ENCODE measurements at regions of chr13 and their contacts with region 1.

Region 1: DNA sequence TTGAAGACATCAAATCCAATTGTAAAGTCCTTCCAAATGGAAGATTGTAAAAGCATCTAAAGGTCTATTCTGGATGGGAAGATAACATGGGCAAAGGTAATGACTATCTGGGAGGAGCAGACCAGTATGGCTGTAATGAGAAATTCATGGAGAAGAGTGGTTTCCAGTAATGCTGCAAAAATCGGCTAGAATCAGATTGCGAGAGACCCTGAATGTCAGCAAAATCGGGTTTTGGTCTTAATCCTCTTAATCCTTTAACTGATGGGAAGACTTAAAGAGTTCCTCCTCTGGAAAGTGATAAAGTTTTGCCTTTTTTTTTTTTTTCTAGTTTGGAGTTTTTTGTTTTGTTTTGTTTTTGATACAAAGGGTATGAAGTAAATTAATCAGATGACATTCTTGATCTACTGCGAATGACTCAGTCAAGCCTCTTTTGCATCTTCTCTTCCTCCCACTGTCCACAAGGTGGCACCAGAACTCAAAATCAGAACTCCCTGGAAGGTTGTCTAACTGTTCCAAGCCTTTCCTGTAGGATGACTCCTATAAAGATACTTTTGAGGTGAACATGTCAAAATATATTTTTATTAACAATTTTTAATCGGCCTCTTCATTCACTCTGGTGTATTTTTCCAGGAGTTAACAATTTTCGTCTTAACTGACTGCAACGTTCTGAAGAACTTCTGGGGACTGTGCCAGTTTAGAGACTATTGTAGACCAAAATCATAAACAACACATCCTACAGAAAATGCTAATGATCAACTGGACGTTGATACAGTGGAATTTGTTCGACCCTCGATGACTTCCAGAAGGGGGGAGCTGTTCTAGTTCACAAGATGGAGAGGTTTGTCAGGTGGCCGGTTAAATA is 213.3 kb upstream of the MIR17HG start:
- DNase-seq: peak; percentile 45
- ATAC-seq: peak; percentile 82
- H3K4me3 ChIP-seq: no peak overlapping the region
- H3K27ac ChIP-seq: no peak overlapping the region
- H3K4me1 ChIP-seq: no peaks in the 10 kb centered on the region
- H3K27me3 ChIP-seq: no peaks in the 10 kb centered on the region
- CTCF ChIP-seq: peak; percentile 17 to 74 (median 67); a peak in 4 of 6 replicates
- POLR2A ChIP-seq: no peak
- RAD21 ChIP-seq: peak; percentile 49

Region 2: GRCh38 chr13:90839061-90839460 is 295.1 kb before region 1 on chr13:
- CTCF ChIA-PET with region 1: no interaction called
- POLR2A ChIA-PET with region 1: no interaction called
- RAD21 ChIA-PET with region 1: no interaction called
- intact Hi-C with region 1: no loop called
- DNase-seq: no peak
- ATAC-seq: no peak
- H3K4me3 ChIP-seq: no peak overlapping the region
- H3K27ac ChIP-seq: no peak overlapping the region
- H3K4me1 ChIP-seq: no peaks in the 10 kb centered on the region
- H3K27me3 ChIP-seq: no peaks in the 10 kb centered on the region
- CTCF ChIP-seq: no peak
- POLR2A ChIP-seq: no peak
- RAD21 ChIP-seq: no peak

Region 3: GRCh38 chr13:91145571-91146205 is 11.5 kb after region 1 on chr13:
- CTCF ChIA-PET with region 1: no interaction called
- POLR2A ChIA-PET with region 1: no interaction called
- RAD21 ChIA-PET with region 1: no interaction called
- intact Hi-C with region 1: no loop called
- DNase-seq: no peak
- ATAC-seq: no peak
- H3K4me3 ChIP-seq: no peak overlapping the region
- H3K27ac ChIP-seq: no peak overlapping the region
- H3K4me1 ChIP-seq: no peaks in the 10 kb centered on the region
- H3K27me3 ChIP-seq: peaks cover 13% of the 10 kb centered on the region
- CTCF ChIP-seq: no peak
- POLR2A ChIP-seq: no peak
- RAD21 ChIP-seq: no peak

Region 4: DNA sequence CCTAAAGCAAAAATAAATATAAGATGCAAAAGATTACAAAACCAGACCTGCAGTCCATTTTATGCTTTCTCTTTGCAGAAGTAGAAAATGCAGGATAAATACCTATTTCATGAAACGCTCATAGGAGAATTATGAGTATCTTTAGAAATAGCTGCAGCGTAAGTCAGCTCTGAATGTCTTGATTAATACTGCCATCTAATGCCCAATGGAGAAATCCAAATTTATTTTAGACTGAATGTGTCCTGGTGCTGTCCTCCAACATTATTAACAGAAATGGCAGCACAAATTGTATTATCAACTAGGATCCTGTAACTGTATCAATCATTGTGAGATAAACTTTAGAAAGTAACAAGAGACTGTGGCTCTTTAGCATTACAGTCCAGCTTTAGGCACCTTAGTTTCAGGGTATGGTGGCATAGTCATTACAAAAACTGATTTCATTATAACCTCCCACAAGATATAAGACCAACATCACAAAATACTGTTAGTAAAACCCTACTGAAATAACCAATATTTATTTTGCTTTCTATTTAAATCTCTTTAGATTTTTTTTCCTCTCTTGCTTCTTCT is 51.2 kb after region 1 on chr13:
- CTCF ChIA-PET with region 1: interaction called, 4 read pairs
- POLR2A ChIA-PET with region 1: no interaction called
- RAD21 ChIA-PET with region 1: no interaction called
- intact Hi-C with region 1: loop called (anchors 5 kb)
- DNase-seq: peak; percentile 7
- ATAC-seq: no peak
- H3K4me3 ChIP-seq: no peak overlapping the region
- H3K27ac ChIP-seq: no peak overlapping the region
- H3K4me1 ChIP-seq: no peaks in the 10 kb centered on the region
- H3K27me3 ChIP-seq: peaks cover 4% of the 10 kb centered on the region
- CTCF ChIP-seq: peak in 1 of 3 experiments; percentile 31; a peak in 1 of 6 replicates
- POLR2A ChIP-seq: no peak
- RAD21 ChIP-seq: peak; percentile 33; the same call in 1 of the 2 replicates

Region 5: GRCh38 chr13:91247768-91248167 is 113.6 kb after region 1 on chr13:
- CTCF ChIA-PET with region 1: no interaction called
- POLR2A ChIA-PET with region 1: no interaction called
- RAD21 ChIA-PET with region 1: no interaction called
- intact Hi-C with region 1: loop called (anchors 5 kb)
- DNase-seq: no peak
- ATAC-seq: no peak
- H3K4me3 ChIP-seq: no peak overlapping the region
- H3K27ac ChIP-seq: no peak overlapping the region
- H3K4me1 ChIP-seq: no peaks in the 10 kb centered on the region
- H3K27me3 ChIP-seq: peaks cover 6% of the 10 kb centered on the region
- CTCF ChIP-seq: peak in 1 of 3 experiments; percentile 26; a peak in 1 of 6 replicates
- POLR2A ChIP-seq: no peak
- RAD21 ChIP-seq: peak; percentile 37

Region 6: DNA sequence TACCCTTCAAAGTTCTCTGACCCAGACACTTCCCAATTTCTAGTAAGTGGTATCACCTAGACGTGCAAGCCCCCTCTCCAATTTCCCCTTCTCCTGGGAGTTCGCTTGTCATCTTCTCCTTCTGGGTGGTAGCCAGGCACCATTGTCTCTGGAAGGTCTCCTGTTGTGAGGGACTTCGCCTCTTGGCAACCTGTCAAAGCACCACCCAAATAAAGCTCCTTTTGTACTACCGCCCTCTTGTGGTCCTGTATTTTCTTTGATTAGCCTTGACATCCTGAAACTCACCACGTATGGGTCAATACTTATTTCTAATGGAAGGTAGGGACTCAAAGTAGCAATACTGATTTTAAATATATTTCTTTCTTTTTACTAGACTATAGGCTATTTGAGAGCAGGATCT is 272.4 kb after region 1 on chr13:
- CTCF ChIA-PET with region 1: no interaction called
- POLR2A ChIA-PET with region 1: no interaction called
- RAD21 ChIA-PET with region 1: no interaction called
- intact Hi-C with region 1: loop called (anchors 2 kb)
- DNase-seq: peak; percentile 45
- ATAC-seq: peak; percentile 70
- H3K4me3 ChIP-seq: no peak overlapping the region
- H3K27ac ChIP-seq: no peak overlapping the region
- H3K4me1 ChIP-seq: no peaks in the 10 kb centered on the region
- H3K27me3 ChIP-seq: peaks cover 23% of the 10 kb centered on the region
- CTCF ChIP-seq: peak; percentile 16 to 66 (median 54); a peak in 5 of 6 replicates
- POLR2A ChIP-seq: no peak
- RAD21 ChIP-seq: peak; percentile 35

Measured in HCT116 (cell line).